Left colon (tissue), 2 donors: ENCODE measurements at regions of chr11 and their contacts with region 1.

Region 1: DNA sequence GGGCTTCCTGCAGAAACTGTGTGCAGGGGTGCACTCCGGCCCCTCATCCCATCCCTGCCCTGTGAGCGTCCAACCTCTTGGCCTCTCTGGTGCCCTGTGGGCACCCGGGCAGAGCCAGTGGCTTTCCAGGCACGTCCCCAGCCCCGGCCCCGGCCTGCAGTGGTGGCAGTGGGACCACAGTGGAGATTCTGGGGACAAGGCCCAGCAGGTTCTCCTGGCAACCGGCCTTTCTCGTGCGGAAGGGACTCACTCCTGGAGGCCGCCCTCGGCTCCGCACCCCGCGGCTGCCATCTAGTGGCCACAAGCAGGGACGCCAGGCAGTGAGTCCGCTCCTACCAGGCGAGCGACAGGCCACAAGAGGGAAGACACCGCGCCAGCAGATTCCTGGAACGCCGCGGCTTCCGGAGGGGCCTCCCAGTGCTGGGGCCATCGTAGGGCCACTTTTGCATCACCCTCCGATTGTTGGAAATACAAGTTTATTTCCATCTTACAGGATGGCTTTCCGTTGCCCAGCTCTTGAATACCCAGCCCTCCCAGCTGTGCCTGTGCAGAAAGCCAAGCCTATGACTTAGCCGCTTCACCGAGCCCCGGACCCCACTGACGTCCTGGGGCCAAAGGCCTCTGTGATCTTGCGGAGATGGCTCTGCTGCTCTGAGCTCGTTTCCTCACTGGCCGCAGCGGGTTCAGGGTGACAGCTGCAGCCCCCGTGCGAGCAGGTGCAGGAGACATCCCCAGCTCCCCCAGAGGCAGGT is 357.3 kb downstream of the CTTN start:
- DNase-seq: peak; percentile 51 to 80
- ATAC-seq: peak; percentile 99

Region 2: GRCh38 chr11:70467201-70468085 is 288.1 kb before region 1 on chr11:
- intact Hi-C with region 1: loop called (anchors 2 to 10 kb)
- DNase-seq: peak in 1 of 2 donors; percentile 76
- ATAC-seq: peak; percentile 70

Region 3: GRCh38 chr11:70568038-70568813 is 187.4 kb before region 1 on chr11:
- intact Hi-C with region 1: no loop called
- DNase-seq: peak; percentile 74 to 75
- ATAC-seq: peak; percentile 91

Region 4: GRCh38 chr11:70712471-70712870 is 43.1 kb before region 1 on chr11:
- intact Hi-C with region 1: no loop called
- DNase-seq: peak; percentile 49 to 76
- ATAC-seq: peak; percentile 95